ENCODE measurements at regions of chr6 and their contacts with region 1.

Region 1: DNA sequence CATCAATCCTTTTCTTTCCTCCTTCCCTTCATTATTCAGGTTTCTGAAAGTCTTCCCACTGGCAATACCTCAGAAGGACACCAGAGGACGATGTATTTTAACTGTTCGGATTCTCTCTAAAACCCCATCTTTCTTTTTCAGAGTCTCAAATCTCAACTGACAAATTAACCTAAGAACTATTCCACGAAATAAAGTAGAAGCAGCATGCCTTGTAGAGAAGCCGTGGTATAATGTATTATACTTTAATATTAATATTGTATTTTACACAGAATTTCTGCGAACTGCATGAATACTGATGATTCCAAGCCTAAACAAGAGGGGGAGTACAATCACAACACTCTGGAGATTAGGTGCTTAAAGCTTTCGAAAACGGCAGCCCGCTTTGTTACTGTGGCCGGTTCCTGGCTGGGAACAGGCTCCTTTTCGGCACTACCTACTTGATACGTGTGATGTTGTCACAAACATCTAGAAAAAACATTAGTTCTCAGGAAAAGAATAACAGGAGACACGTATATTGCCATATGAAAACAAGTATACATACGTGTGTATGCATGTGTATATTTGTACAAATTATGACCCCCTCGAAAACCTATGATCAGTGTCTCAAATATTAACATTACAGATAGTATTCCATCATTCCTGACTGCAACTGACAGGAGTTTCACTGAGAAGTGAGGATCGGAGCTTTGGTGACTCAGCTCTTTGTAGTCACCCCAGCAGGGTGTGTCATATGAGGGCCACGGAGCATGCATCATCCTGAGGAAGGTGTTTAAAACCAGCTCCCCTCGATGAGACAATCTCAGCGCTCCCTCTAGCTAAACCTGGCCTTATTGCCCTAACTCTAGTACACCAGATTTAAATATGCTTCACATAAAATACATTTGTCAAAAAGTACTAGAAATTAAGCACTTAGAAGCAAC is 319.7 kb upstream of the TCF21 start:
- DNase-seq: peak; percentile 97
- H3K4me3 Mint-ChIP-seq: peak overlapping the region; percentile 71
- H3K27ac Mint-ChIP-seq: peak overlapping the region; percentile 93
- H3K4me1 Mint-ChIP-seq: peaks cover 16% of the 10 kb centered on the region
- H3K27me3 Mint-ChIP-seq: no peaks in the 10 kb centered on the region
- CTCF ChIP-seq: peak; percentile 85

Region 2: DNA sequence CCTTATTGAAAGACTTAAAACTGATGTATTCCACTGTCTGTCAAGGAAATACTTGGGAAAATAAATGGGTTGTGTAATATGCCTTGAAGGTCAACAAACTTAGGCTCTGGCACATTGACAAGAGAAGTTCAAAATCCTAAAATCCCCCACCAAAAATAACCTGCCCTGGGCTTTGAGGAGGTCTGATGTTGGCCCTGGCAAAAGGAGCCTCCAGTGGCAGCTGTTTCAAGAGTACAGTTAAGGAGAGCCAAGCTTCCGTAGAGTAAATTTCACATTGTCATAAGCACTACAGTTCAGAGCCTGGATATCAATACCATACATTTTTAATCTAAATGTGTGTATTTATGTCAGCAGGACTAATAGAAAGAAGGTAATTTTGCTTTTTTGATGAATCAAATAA is 45.4 kb before region 1 on chr6:
- CTCF ChIA-PET with region 1: no interaction called
- POLR2A ChIA-PET with region 1: no interaction called
- intact Hi-C with region 1: no loop called
- DNase-seq: no peak
- H3K4me3 Mint-ChIP-seq: no peak overlapping the region
- H3K27ac Mint-ChIP-seq: no peak overlapping the region
- H3K4me1 Mint-ChIP-seq: no peaks in the 10 kb centered on the region
- H3K27me3 Mint-ChIP-seq: peaks cover 64% of the 10 kb centered on the region
- CTCF ChIP-seq: no peak

Region 3: GRCh38 chr6:133553652-133554051 is 15.6 kb before region 1 on chr6:
- CTCF ChIA-PET with region 1: interaction called, 17 read pairs
- POLR2A ChIA-PET with region 1: no interaction called
- intact Hi-C with region 1: no loop called
- DNase-seq: peak; percentile 70
- H3K4me3 Mint-ChIP-seq: no peak overlapping the region
- H3K27ac Mint-ChIP-seq: no peak overlapping the region
- H3K4me1 Mint-ChIP-seq: peaks cover 12% of the 10 kb centered on the region
- H3K27me3 Mint-ChIP-seq: no peaks in the 10 kb centered on the region
- CTCF ChIP-seq: peak; percentile 61

Region 4: DNA sequence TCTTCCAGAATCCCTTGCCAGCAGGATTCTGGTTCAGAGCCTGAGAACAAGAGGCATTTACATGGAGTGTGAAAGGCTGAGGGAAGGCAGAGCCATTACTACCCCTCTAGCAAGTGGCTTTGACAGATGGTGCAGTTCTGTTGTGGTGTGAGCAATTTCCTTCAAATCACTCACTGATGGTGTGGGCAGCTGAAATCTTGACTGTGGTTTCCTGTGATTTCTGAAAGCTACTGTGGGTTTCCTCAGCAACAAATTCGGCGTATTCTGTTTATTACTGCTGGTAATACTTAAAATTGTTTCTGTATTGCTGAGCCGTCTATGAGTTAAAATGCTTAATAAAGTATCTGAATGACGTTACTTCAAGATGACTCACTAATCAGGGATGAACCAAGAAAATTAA is 138.2 kb after region 1 on chr6:
- CTCF ChIA-PET with region 1: interaction called, 6 read pairs
- POLR2A ChIA-PET with region 1: interaction called, 8 read pairs
- intact Hi-C with region 1: loop called (anchors 1 kb)
- DNase-seq: peak; percentile 28
- H3K4me3 Mint-ChIP-seq: no peak overlapping the region
- H3K27ac Mint-ChIP-seq: peak overlapping the region; percentile 69
- H3K4me1 Mint-ChIP-seq: peaks cover 35% of the 10 kb centered on the region
- H3K27me3 Mint-ChIP-seq: no peaks in the 10 kb centered on the region
- CTCF ChIP-seq: no peak

Region 5: DNA sequence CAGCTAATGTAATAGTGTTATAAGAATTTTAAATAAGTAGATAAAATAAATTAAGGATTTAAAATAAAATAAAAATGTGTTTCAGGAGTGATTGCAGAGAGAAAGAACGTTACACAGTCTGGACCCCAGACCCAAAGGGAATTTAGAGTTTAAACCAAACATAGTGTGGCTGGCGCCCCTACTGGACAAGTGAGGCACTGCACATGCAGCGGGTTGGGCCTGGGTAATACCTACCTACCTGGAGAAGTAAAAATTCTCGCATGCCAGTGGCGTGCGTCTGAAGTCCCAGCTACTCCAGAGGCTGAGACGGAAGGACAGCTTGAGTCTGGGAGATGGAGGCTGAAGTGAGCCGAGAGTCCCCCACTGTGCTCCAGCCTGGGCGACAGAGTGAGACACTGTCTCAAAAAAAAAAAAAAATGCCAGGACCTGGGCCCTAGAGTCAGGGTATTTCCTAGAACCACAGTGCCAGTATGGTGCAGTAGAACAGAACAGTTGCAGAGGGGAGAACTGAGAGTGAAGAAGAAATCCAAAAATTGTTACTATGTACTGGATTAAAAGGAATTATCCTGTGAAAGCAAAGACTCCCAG is 248.3 kb after region 1 on chr6:
- CTCF ChIA-PET with region 1: interaction called, 4 read pairs
- POLR2A ChIA-PET with region 1: no interaction called
- intact Hi-C with region 1: loop called (anchors 1 kb)
- DNase-seq: no peak
- H3K4me3 Mint-ChIP-seq: no peak overlapping the region
- H3K27ac Mint-ChIP-seq: no peak overlapping the region
- H3K4me1 Mint-ChIP-seq: peaks cover 14% of the 10 kb centered on the region
- H3K27me3 Mint-ChIP-seq: no peaks in the 10 kb centered on the region
- CTCF ChIP-seq: peak; percentile 31

Region 6: DNA sequence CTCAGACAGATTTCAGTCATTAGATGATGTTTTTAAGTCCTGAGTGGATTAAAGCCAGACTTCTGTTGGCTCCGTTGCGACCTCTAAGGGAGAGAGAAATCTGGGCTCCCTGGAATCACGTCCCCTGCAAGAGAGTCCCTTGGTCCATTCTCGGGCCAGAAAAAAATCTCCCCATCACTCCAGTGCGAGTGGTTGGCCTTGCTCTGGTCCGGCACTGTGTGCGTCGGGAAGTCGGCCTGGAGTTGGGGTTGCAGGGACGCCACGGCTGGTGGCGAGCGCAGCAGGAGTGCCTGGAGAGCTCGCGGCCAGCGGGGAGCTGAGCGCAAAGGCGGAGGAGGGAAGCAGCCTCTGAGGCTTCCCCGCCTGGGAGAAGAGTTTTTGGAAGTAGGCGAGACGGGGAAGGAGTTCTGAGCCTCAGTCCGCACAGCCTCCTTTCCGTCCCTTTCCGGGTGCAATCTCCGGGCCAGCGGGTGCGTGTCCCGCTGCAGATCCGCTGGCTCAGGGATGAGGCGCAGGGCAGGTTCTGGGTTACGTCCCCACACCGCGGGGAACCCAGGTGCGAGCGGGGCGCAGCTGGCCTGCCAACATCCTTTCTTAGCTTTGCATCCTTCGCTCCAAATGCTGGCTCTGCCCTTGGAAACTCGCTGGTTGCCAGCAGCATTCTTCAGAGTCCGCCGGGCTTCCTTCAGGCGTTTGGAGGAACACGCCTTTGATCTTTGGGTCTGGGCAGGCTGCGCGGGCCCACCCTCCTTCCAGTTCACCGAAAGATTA is 326.5 kb after region 1 on chr6:
- CTCF ChIA-PET with region 1: interaction called, 14 read pairs
- POLR2A ChIA-PET with region 1: interaction called, 5 read pairs
- intact Hi-C with region 1: loop called (anchors 1 kb)
- DNase-seq: no peak
- H3K4me3 Mint-ChIP-seq: no peak overlapping the region
- H3K27ac Mint-ChIP-seq: no peak overlapping the region
- H3K4me1 Mint-ChIP-seq: peaks cover 14% of the 10 kb centered on the region
- H3K27me3 Mint-ChIP-seq: no peaks in the 10 kb centered on the region
- CTCF ChIP-seq: no peak

Region 7: DNA sequence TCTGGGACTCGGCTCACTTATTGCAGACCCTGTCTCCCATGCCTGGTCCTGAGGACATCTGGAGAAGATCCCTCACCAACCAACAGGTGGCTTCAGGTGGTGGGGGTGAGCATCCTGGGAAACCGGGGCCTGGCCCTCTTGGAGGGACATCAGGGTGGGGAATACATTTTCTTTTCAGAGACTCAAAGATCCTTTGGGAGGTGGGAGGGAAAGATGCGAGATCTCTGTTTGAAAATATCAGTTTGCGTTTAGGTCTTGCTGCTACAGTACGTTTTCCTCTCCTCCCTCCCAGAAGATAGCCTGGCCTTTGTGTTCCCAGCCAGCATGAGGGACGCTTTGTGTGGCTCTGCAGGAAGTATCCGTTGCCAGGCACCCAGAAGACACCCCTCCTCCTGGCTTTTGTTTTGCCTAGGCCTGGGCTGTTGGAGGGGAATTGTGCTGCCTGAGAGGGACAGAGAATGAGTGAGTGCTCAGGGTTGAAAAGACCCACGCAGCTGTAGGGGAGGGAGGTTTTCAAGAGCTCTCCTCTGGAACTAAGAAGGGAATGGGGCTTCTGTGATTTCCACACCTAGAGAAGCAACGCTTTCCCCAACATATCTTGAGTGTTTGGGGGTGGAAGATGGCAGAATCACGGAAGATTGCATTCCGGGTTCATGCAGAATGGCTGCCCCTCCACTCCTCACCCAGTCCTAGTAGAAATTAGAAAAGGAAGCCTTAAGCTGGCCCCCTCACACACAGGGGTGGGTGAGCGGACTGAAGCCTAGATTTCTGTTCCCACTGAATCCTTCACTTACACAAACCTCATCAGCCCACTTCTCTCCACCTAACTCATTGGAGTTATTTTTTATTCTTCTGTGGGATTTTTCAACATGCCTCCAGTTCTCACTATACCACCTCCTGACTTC is 505.2 kb after region 1 on chr6:
- CTCF ChIA-PET with region 1: no interaction called
- POLR2A ChIA-PET with region 1: no interaction called
- intact Hi-C with region 1: no loop called
- DNase-seq: no peak
- H3K4me3 Mint-ChIP-seq: no peak overlapping the region
- H3K27ac Mint-ChIP-seq: no peak overlapping the region
- H3K4me1 Mint-ChIP-seq: no peaks in the 10 kb centered on the region
- H3K27me3 Mint-ChIP-seq: no peaks in the 10 kb centered on the region
- CTCF ChIP-seq: no peak

Region 8: DNA sequence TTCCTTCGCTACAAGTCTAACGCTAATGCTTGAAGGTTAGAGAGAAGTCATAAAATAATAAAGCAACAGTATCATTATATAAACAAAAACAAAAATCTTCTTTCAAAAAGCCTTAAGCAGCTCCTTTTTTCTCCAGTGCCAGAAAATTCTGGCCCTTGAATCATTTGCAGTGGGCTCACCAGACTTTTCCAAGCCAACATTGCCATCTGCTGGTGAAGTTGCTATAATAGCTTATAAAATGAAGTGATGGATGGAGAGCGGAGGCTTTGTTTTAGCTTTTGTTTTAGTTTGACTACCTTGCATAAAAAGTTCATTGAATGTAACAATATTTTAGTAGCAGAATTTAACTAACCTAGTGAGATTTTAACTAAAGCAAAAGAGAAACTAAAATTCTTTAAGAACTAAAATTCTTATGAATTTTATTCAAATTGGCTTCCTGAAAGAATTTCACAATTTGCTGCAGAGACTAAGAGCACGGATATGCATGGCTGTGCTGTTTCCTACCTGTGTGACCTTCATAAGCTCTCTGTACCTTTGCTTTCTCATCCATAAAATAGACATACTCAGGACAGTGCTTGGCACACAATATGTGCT is 528.0 kb after region 1 on chr6:
- CTCF ChIA-PET with region 1: interaction called, 28 read pairs
- POLR2A ChIA-PET with region 1: no interaction called
- intact Hi-C with region 1: loop called (anchors 2 kb)
- DNase-seq: peak; percentile 83
- H3K4me3 Mint-ChIP-seq: no peak overlapping the region
- H3K27ac Mint-ChIP-seq: no peak overlapping the region
- H3K4me1 Mint-ChIP-seq: no peaks in the 10 kb centered on the region
- H3K27me3 Mint-ChIP-seq: peaks cover 13% of the 10 kb centered on the region
- CTCF ChIP-seq: peak; percentile 61

Measured in MCF 10A (cell line).